Breast epithelium (tissue), 4 donors: ENCODE measurements at regions of chr2 and their contacts with region 1.

Region 1: GRCh38 chr2:48605482-48606175 is 12.0 kb upstream of the GTF2A1L start:
- DNase-seq: no peak
- H3K4me3 ChIP-seq: no peak overlapping the region
- H3K27ac ChIP-seq: no peak overlapping the region
- H3K4me1 ChIP-seq: no peaks in the 10 kb centered on the region
- H3K27me3 ChIP-seq: no peaks in the 10 kb centered on the region
- CTCF ChIP-seq: no peak
- POLR2A ChIP-seq: no peak

Region 2: DNA sequence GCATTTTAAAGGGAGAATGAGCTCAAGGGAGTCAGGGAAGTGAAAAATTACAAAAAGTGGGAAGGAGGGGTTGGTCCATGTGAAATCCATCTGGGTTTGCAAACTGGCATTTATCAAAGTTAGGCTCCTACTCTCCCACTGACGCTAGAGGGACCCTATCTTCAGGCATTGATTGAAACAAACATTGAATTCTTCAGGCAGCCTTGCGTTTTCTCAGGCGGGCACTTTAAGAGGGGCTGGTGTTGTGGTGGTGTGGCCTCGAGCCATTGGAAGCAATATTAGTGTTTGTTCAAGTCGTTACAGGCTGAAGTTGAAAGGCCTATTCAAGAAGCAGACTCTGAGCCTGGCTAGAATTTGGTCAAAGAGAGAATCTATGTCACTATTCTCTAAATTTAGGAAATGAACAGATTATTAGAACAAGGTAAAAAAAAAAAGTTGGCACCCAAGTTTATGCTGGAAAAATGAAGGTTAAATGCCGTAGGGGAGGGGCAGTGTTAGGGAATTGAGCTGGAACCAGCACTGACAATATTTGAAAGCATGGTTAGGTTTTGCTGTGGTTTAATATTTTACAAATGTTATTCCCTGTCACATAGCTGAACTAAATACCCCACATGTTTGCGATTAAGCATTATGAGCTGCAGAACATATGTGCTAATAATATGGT is 38.9 kb before region 1 on chr2:
- intact Hi-C with region 1: loop called (anchors 2 kb)
- DNase-seq: no peak
- H3K4me3 ChIP-seq: no peak overlapping the region
- H3K27ac ChIP-seq: no peak overlapping the region
- H3K4me1 ChIP-seq: no peaks in the 10 kb centered on the region
- H3K27me3 ChIP-seq: no peaks in the 10 kb centered on the region
- CTCF ChIP-seq: peak in 2 of 3 donors; percentile 14 to 31
- POLR2A ChIP-seq: no peak